Calu3 (cell line): ENCODE measurements at regions of chr4 and their contacts with region 1.

Region 1: GRCh38 chr4:72152731-72153130 is 120.9 kb downstream of the NPFFR2 start:
- DNase-seq: no peak
- H3K4me3 Mint-ChIP-seq: no peak overlapping the region
- H3K27ac Mint-ChIP-seq: no peak overlapping the region
- H3K4me1 Mint-ChIP-seq: no peaks in the 10 kb centered on the region
- H3K27me3 Mint-ChIP-seq: no peaks in the 10 kb centered on the region
- CTCF ChIP-seq: no peak

Region 2: GRCh38 chr4:72169861-72170260 is 17.1 kb after region 1 on chr4:
- CTCF ChIA-PET with region 1: no interaction called
- intact Hi-C with region 1: loop called (anchors 1 kb)
- DNase-seq: no peak
- H3K4me3 Mint-ChIP-seq: no peak overlapping the region
- H3K27ac Mint-ChIP-seq: peak overlapping the region; percentile 35
- H3K4me1 Mint-ChIP-seq: peaks cover 8% of the 10 kb centered on the region
- H3K27me3 Mint-ChIP-seq: no peaks in the 10 kb centered on the region
- CTCF ChIP-seq: no peak